SK-N-SH (cell line): ENCODE measurements at regions of chr9 and their contacts with region 1.

Region 1: GRCh38 chr9:126781186-126782052 is 23.4 kb upstream of the ZBTB43 start:
- DNase-seq: peak; percentile 93
- H3K4me3 ChIP-seq: no peak overlapping the region; a peak in 1 of 4 replicates
- H3K27ac ChIP-seq: no peak overlapping the region
- H3K4me1 ChIP-seq: peaks cover 0 to 2% of the 10 kb centered on the region in 2 experiments; a peak in 1 of 4 replicates
- H3K27me3 ChIP-seq: peaks cover 12% of the 10 kb centered on the region; the same call in 1 of the 2 replicates
- CTCF ChIP-seq: peak; percentile 93
- EP300 ChIP-seq: no peak
- RAD21 ChIP-seq: peak; percentile 96

Region 2: DNA sequence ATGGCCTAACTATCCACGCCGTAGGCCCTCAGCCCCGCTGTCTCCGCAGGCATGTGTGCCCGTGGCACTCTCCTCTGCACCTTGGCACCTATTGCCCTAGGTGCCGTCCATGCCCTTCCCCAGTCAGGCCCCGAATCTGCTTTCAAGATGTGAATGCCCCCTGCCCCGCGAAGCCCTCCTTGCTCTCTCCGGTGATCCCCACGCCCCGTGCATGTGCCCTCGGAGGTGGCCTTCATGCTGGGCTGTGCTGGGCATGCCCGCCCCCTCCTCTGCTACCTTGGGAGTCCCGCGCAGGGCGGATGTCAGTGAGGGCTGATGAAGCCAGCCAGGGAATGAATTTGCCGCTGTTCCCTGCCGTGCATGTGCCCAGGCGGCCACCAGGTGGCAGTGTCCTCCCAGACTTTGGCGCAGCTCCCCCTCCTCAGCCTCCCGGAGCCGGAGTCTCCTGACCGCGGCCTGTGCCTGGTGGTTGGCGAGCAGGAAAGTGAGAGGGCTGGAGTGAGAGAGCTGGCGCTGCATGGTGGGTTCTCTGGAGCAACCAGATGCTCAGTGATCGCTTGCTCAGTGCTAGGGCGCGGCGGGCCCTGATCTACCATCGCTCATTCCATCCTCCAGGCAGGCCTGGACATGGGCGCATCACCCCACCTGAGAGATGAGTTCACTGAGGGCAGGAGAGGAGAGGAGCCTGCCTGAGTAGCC is 280.6 kb before region 1 on chr9:
- CTCF ChIA-PET with region 1: interaction called, 18 read pairs
- POLR2A ChIA-PET with region 1: no interaction called
- DNase-seq: peak; percentile 95
- H3K4me3 ChIP-seq: peak overlapping the region in 1 of 2 experiments; percentile 54; a peak in 1 of 4 replicates
- H3K27ac ChIP-seq: no peak overlapping the region; a peak in 1 of 4 replicates
- H3K4me1 ChIP-seq: peaks cover 0 to 26% of the 10 kb centered on the region in 2 experiments; a peak in 1 of 4 replicates
- H3K27me3 ChIP-seq: no peaks in the 10 kb centered on the region
- CTCF ChIP-seq: peak; percentile 86
- EP300 ChIP-seq: no peak
- RAD21 ChIP-seq: peak; percentile 99

Region 3: GRCh38 chr9:126636983-126637798 is 144.2 kb before region 1 on chr9:
- CTCF ChIA-PET with region 1: interaction called, 16 read pairs
- POLR2A ChIA-PET with region 1: no interaction called
- DNase-seq: no peak
- H3K4me3 ChIP-seq: no peak overlapping the region
- H3K27ac ChIP-seq: no peak overlapping the region
- H3K4me1 ChIP-seq: no peaks in the 10 kb centered on the region; a peak in 1 of 4 replicates
- H3K27me3 ChIP-seq: peaks cover 98% of the 10 kb centered on the region
- CTCF ChIP-seq: no peak
- EP300 ChIP-seq: no peak
- RAD21 ChIP-seq: no peak

Region 4: DNA sequence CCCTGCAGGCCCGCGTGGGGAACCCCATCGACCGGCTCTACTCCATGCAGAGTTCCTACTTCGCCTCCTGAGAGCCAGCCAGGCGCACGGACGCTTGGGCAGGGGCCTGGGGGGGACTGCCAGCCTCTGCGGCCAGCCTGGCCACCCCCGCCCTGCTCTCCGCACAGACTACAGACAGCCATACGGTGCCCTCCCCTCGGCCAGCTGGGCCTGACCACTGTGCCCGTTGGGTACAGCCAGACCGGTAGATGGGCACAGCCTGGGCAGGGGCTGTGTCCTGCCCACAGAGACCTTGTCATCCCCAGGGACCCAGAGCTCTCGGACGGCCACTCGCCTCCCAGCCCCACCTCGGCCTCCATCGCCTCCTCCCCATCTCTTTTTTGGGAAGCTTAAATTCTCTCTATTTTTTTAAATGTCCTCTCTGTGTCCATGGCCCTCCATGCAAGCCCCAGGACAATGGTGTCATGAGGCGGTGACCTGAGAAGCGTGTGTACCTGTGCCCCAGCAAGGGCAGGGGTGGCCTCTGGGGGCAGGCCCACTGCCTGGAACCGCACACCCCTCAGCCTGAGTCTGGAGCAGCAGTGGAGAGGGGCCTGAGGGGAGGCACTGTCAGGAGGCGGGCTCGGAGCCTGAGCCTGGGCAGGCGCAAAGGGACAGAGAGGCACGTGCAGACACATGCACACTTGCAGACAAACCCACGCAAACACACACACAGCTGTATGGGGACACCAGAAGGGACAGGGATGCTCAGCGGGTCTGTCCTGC is 84.9 kb before region 1 on chr9:
- CTCF ChIA-PET with region 1: interaction called, 502 read pairs
- POLR2A ChIA-PET with region 1: no interaction called
- DNase-seq: peak; percentile 41
- H3K4me3 ChIP-seq: no peak overlapping the region
- H3K27ac ChIP-seq: no peak overlapping the region
- H3K4me1 ChIP-seq: no peaks in the 10 kb centered on the region
- H3K27me3 ChIP-seq: peaks cover 25% of the 10 kb centered on the region; the same call in 1 of the 2 replicates
- CTCF ChIP-seq: no peak
- EP300 ChIP-seq: no peak
- RAD21 ChIP-seq: no peak

Region 5: DNA sequence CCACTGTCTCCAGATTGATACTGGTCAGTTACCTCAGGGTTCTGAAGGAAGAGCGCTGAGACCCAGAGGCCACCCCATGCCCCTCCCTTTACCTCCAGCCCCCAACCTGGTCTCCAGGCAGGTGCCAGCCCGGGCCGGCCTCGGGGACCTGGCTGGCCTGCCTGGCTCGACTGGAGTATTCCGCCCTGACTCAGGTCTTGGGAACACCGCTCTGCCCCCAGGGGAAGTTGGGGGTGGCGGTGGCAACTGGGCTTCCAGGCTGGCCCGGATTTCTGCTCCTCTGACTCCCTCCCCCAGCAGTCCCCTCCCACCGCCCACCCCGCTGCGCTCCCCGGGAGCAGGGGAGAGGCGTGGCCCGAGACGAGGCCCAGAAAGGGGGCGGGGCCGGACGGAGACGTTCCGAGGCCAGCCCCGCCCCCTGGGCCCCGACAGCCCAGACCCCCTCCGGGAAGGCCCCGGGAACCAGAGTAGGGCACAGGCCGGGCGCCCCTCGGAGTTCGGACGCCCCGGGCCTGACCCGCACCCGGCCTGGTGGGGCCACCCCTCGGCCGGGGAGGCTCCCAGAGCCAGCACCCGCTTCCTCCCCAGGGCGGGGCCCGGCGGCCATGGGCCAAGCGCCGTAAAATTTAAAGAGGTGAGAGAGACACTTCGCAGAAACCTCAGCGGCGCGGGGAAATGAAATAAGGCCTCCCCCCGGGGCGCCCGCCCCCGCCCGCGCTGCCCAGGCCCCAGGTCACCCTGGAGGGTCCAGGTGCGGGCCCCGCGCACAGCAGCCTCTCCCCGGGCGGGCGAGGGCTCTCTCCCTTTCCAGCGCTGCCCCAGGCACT is 59.0 kb before region 1 on chr9:
- CTCF ChIA-PET with region 1: interaction called, 14 read pairs
- POLR2A ChIA-PET with region 1: no interaction called
- DNase-seq: peak; percentile 86
- H3K4me3 ChIP-seq: peak overlapping the region; percentile 52 to 54; a peak in 3 of 4 replicates
- H3K27ac ChIP-seq: peak overlapping the region in 1 of 2 experiments; percentile 94; a peak in 2 of 4 replicates
- H3K4me1 ChIP-seq: peaks cover 10 to 34% of the 10 kb centered on the region in 2 experiments; a peak in 2 of 4 replicates
- H3K27me3 ChIP-seq: peaks cover 12% of the 10 kb centered on the region; the same call in 1 of the 2 replicates
- CTCF ChIP-seq: no peak
- EP300 ChIP-seq: no peak
- RAD21 ChIP-seq: no peak

Region 6: DNA sequence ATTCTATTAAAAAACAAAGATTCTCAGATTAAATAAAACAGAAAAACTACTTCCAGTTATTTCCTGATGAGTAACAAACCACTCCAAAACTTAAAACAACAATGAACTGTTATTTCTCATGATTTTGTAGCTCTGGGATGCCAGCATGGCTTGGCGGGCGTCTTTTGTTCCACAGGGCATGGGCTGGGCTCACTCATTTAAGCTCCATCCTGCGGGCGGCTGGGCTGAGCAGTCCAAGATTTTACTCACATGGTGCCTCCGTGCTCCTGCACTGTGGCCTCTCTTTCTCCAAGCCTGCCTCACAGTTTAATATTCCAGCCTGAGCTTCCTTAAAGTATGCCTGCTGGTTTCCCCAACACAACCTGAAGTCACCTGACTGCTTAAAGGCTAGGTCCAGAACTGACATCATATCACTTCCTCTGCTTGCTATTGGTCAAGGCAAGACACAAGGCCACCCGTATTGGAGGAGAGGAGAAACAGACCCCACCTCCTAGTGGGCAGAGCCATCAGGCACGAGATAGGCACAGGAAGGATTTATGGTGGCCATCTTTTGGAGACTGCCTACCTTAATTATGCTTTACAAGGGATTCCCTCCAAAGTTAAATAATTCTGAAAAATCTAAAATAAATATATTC is 18.2 kb before region 1 on chr9:
- CTCF ChIA-PET with region 1: interaction called, 14 read pairs
- POLR2A ChIA-PET with region 1: no interaction called
- DNase-seq: peak; percentile 42
- H3K4me3 ChIP-seq: no peak overlapping the region
- H3K27ac ChIP-seq: no peak overlapping the region
- H3K4me1 ChIP-seq: no peaks in the 10 kb centered on the region
- H3K27me3 ChIP-seq: 0 out of 2 replicates have a peak, but pooled peaks cover 5% of the 10 kb centered on the region
- CTCF ChIP-seq: no peak
- EP300 ChIP-seq: no peak
- RAD21 ChIP-seq: no peak

Region 7: DNA sequence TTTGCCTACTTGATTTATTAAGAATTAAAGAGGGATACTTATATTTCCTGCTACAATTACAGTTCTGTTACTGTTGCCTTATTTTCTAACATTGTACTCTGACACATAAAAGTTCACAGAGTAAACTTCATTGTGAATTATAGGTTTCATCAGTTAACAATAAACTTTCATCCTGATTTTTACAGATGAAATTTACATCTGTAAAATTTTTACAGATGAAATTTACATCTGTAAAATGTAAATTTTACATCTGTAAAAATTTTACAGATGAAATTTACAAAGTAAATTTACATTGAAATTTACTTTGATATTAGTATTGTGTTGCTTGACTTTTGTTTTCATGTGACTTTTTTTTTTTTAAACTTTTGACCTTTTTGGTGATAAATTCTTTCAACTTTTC is 32.7 kb after region 1 on chr9:
- CTCF ChIA-PET with region 1: no interaction called
- POLR2A ChIA-PET with region 1: no interaction called
- DNase-seq: no peak
- H3K4me3 ChIP-seq: no peak overlapping the region
- H3K27ac ChIP-seq: no peak overlapping the region
- H3K4me1 ChIP-seq: no peaks in the 10 kb centered on the region; a peak in 1 of 4 replicates
- H3K27me3 ChIP-seq: no peaks in the 10 kb centered on the region
- CTCF ChIP-seq: no peak
- EP300 ChIP-seq: no peak
- RAD21 ChIP-seq: no peak

Region 8: GRCh38 chr9:126874546-126875311 is 93.3 kb after region 1 on chr9:
- CTCF ChIA-PET with region 1: no interaction called
- POLR2A ChIA-PET with region 1: no interaction called
- DNase-seq: no peak
- H3K4me3 ChIP-seq: no peak overlapping the region
- H3K27ac ChIP-seq: no peak overlapping the region
- H3K4me1 ChIP-seq: no peaks in the 10 kb centered on the region; a peak in 1 of 4 replicates
- H3K27me3 ChIP-seq: no peaks in the 10 kb centered on the region
- CTCF ChIP-seq: no peak
- EP300 ChIP-seq: no peak
- RAD21 ChIP-seq: no peak

Region 9: DNA sequence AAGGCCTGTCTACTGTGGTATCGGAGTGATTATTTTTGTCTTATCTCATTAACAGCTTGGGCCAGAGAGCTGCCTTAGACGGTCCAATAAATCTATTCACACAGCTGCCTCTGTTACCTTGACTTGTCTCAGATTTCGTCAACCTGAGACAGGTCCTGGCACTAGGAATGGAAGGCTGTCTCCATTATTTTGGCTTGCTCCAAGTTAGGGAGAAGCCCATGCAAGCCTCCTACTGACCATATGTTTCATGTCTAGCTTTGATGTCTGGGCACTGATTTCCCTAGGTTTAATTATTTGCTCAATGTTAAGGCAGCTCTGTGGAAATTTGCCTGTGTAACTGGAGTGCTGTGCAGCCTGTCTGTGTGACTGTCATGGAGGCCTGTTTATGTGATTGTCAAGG is 120.8 kb after region 1 on chr9:
- CTCF ChIA-PET with region 1: no interaction called
- POLR2A ChIA-PET with region 1: no interaction called
- DNase-seq: no peak
- H3K4me3 ChIP-seq: no peak overlapping the region
- H3K27ac ChIP-seq: no peak overlapping the region
- H3K4me1 ChIP-seq: no peaks in the 10 kb centered on the region
- H3K27me3 ChIP-seq: peaks cover 5% of the 10 kb centered on the region; the same call in 1 of the 2 replicates
- CTCF ChIP-seq: no peak
- EP300 ChIP-seq: no peak
- RAD21 ChIP-seq: no peak

Region 10: DNA sequence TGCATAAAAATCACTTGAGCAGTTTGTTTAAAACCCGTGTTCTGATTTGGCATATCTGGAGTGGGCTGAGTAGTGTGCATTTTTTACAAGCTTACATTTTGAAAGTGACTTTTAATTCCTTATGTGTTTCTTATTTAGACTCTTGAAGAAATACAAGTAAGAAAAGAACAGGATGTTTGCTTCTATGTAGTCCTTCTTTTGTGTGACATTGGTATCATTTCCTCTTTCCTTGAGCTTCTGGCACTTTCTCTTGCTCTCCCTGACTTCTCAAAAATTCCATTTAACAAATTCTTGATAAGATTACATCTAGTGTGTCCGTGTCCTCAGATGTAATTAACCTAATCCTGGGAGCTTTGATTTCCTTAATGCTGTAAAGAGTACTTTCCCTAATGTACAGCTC is 495.7 kb after region 1 on chr9:
- CTCF ChIA-PET with region 1: no interaction called
- POLR2A ChIA-PET with region 1: no interaction called
- DNase-seq: no peak
- H3K4me3 ChIP-seq: no peak overlapping the region
- H3K27ac ChIP-seq: no peak overlapping the region; a peak in 1 of 4 replicates
- H3K4me1 ChIP-seq: peaks cover 0 to 20% of the 10 kb centered on the region in 2 experiments; a peak in 2 of 4 replicates
- H3K27me3 ChIP-seq: no peaks in the 10 kb centered on the region
- CTCF ChIP-seq: no peak
- EP300 ChIP-seq: no peak
- RAD21 ChIP-seq: no peak